PC-3 (cell line): ENCODE measurements at regions of chr12 and their contacts with region 1.

Region 1: GRCh38 chr12:65602610-65603295 is 221.5 kb upstream of the HMGA2 start:
- DNase-seq: peak; percentile 93
- ATAC-seq: peak; percentile 70
- H3K4me3 ChIP-seq: peak overlapping the region; percentile 59
- H3K27ac ChIP-seq: peak overlapping the region; percentile 96
- H3K4me1 ChIP-seq: peaks cover 70% of the 10 kb centered on the region
- H3K27me3 ChIP-seq: no peaks in the 10 kb centered on the region
- CTCF ChIP-seq: peak; percentile 93

Region 2: DNA sequence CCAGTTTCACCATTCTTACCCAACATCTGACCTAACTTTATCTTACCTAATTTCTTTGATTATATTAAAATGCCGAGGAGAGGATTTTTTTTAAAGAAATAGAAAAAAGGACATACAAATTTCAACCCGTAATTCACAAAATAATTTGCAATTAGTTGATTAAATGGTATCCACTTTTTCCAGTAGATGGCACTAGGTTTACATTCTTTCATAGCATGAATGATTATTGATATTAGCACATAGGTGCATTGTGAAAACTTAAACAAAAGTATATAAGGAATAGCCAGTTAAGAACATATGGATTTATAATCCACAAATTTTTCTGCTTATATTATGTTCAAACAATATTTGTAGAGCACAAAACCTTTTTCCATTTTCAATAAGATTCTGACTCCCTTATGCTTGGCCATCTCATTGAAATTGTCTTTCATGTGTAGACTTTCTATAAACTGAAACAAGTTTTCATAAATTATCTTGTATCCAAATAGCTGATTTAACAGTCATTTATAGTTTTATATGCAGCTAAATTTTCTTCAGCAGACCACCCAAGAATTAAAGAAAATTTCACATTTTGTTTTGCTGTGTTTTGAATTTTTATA is 288.9 kb before region 1 on chr12:
- CTCF ChIA-PET with region 1: interaction called, 4 read pairs
- POLR2A ChIA-PET with region 1: no interaction called
- intact Hi-C with region 1: loop called (anchors 2 kb)
- DNase-seq: peak; percentile 79
- ATAC-seq: peak; percentile 46; the same call in 1 of the 2 replicates
- H3K4me3 ChIP-seq: no peak overlapping the region; the same call in 1 of the 2 replicates
- H3K27ac ChIP-seq: peak overlapping the region; percentile 30
- H3K4me1 ChIP-seq: peaks cover 24% of the 10 kb centered on the region
- H3K27me3 ChIP-seq: no peaks in the 10 kb centered on the region
- CTCF ChIP-seq: peak; percentile 91

Region 3: DNA sequence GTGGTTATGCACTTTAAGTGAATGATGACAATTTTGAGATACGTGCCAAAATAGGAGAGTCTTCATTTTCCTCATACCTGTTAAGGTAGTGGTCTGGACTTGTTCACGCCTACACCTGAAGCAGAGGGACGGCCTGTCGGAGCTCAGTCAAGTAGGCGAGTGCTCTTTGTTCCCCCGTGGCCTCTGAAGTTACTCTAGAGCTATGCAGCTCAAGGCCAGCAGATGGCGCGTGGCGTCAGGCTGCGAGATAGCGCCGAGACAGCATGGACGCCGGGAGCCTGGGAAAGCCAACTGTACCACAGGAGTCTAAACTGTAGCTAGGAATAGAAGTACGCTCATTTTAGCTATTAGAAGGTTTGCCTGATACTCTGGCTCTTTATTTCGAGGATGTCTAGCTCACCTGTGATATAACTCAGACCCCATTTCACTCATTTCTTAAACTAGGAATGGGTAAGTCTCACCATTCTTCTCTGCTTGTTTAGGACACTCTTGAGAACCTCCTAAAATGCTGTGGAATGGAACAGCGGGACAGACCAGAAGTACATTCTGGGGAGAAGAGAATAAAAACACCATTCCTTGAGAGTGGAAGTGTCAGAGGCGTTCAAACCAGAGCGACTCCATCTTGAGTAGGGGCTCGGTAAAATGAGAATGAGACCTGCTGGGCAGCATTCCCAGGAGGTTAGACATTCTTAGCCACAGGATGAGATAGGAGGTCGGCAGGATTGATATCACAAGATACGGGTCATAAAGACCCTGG is 45.9 kb before region 1 on chr12:
- CTCF ChIA-PET with region 1: interaction called, 25 read pairs
- POLR2A ChIA-PET with region 1: no interaction called
- intact Hi-C with region 1: loop called (anchors 1 kb)
- DNase-seq: peak; percentile 95
- ATAC-seq: peak; percentile 99
- H3K4me3 ChIP-seq: no peak overlapping the region
- H3K27ac ChIP-seq: peak overlapping the region; percentile 56
- H3K4me1 ChIP-seq: peaks cover 22% of the 10 kb centered on the region
- H3K27me3 ChIP-seq: no peaks in the 10 kb centered on the region
- CTCF ChIP-seq: peak; percentile 94

Region 4: DNA sequence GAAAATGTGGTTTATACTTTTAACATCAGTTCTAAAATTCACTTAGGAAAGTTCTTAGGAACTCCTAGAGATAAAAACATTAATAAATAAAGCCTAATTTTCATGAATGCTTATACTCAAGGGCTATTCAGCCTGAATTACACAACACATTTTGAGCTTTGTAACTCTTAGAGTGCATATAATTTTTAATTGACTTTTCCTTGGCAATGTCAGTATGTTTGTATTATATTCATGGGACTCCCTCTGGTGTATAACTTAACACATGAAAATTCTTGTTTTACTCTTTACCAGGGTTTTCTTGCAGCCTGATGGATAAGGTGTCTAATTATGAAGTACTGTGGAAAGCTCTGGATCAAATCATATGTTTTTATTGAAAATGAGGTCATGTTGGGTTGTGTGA is 71.0 kb after region 1 on chr12:
- CTCF ChIA-PET with region 1: interaction called, 9 read pairs
- POLR2A ChIA-PET with region 1: interaction called, 3 read pairs
- intact Hi-C with region 1: loop called (anchors 1 kb)
- DNase-seq: peak; percentile 32
- ATAC-seq: peak; percentile 50
- H3K4me3 ChIP-seq: no peak overlapping the region
- H3K27ac ChIP-seq: peak overlapping the region; percentile 71
- H3K4me1 ChIP-seq: peaks cover 46% of the 10 kb centered on the region
- H3K27me3 ChIP-seq: no peaks in the 10 kb centered on the region
- CTCF ChIP-seq: peak; percentile 56

Region 5: DNA sequence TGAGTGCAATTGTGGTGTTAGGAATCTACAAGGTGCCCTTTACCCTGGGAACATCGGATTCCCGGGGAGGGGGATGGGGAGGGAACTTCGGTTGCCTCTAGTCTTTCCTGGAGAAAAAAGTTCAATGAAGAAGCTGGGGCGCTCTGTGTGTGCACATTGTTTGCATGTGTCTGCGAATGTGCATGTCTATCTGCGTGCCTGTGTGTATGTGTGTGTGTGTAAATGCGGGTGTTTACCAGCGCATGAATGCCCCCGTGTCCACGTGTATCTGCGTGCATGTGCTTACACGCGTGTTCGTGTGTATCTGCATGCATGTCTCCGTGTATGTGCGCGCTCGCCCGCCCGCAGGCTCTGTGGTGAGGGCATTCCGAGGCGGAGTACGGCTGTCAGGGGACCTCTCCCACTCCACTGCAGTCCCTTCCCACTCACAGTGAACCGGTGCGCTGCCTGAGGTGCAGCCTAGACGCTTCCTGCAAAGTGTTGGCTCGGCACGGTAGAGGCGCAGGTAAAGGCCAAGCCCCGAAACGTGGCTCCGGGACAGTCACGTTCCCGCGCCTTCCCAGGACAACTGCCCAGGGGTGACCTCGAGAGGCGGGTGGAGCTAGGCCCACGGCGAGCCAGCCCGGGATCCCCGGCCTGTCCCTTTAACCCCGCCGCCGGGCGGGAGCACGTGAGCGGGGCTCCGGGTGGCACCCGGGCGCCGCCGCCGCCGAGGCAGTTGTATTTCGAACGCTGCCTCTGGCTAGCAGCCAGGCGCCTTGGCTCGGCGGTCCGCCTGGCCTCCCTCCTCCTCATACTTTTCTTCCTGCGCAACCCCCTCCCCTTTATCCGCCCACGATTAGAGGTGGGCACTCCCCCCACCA is 221.0 kb after region 1 on chr12:
- CTCF ChIA-PET with region 1: interaction called, 3 read pairs
- POLR2A ChIA-PET with region 1: no interaction called
- intact Hi-C with region 1: loop called (anchors 1 kb)
- DNase-seq: peak; percentile 93
- ATAC-seq: peak; percentile 48
- H3K4me3 ChIP-seq: peak overlapping the region; percentile 92
- H3K27ac ChIP-seq: peak overlapping the region; percentile 95
- H3K4me1 ChIP-seq: peaks cover 37% of the 10 kb centered on the region
- H3K27me3 ChIP-seq: no peaks in the 10 kb centered on the region
- CTCF ChIP-seq: no peak